PC-9 (cell line): ENCODE measurements at regions of chr22 and their contacts with region 1.

Region 1: DNA sequence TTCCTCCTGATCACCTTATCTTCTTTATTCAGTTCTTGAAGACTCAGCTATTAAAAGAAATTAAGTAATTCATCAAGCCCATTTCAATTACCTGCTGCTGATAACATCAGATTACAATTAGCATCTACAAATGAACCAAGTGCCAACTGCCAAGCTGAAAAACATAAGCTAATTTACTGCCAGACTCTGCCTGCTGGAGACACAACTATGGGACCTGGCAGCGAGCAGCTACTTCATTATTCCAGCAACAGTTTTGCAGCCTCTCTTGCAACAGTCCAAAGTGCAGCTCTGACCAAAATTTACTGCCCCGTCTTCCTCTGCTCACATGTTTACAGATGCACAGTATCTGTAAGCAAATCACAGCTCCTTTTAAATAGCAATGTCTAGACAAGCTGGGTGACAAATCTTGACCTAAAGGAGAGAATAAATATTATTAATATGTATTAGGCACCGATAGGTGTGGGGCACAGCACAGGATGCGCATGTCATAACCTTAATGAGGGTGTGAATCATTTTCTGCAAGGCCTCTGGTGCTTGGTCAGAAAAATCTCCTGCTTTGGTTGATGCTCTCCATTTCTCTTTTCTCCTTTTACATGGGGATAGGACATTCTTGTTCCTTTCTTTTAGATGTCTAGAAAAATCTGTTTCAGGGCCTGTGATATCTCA is 232.2 kb upstream of the PITPNB start:
- DNase-seq: no peak
- H3K4me3 ChIP-seq: no peak overlapping the region
- H3K27ac ChIP-seq: no peak overlapping the region
- H3K4me1 ChIP-seq: no peaks in the 10 kb centered on the region
- H3K27me3 ChIP-seq: no peaks in the 10 kb centered on the region
- CTCF ChIP-seq: no peak

Region 2: DNA sequence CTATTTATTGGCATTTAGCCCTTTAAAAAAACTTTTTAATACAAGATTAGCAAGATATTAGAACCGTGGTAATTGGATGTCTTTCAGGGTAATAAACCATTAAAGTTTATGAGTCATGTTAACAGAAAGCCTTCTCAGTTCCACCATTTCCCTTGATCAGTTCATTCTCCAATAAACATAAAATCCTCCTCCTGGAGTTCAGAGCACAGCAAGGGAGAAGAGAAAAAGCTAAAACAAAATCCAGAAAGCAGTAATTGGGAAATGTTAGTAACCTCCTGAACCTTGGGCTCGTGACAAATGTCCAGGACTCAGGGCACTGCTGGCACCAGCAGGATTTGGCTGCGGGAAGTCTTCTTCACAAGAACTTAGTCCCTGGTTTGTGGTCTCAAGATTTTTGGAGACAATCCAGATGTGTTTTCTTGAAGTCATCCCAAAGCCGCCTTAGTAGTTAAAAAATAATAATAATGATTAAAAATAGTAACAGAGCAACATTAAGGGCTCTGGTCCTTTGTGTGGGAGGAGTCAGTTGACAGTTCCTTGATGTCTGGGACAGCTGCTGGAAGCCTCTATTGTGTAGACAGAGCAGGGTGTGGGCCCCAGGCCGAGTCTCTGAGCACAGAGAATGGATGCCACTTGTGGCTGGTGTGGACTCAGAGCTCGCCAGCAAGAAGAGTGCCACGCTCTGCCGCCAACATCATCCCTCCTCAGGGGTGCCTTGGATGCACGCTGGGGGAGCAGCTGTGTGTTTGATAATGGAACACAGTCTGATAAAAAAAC is 188.8 kb before region 1 on chr22:
- CTCF ChIA-PET with region 1: no interaction called
- POLR2A ChIA-PET with region 1: no interaction called
- intact Hi-C with region 1: no loop called
- DNase-seq: no peak
- H3K4me3 ChIP-seq: no peak overlapping the region
- H3K27ac ChIP-seq: no peak overlapping the region
- H3K4me1 ChIP-seq: no peaks in the 10 kb centered on the region
- H3K27me3 ChIP-seq: no peaks in the 10 kb centered on the region
- CTCF ChIP-seq: no peak

Region 3: GRCh38 chr22:28002181-28002700 is 149.0 kb before region 1 on chr22:
- CTCF ChIA-PET with region 1: no interaction called
- POLR2A ChIA-PET with region 1: no interaction called
- intact Hi-C with region 1: no loop called
- DNase-seq: no peak
- H3K4me3 ChIP-seq: no peak overlapping the region
- H3K27ac ChIP-seq: no peak overlapping the region
- H3K4me1 ChIP-seq: peaks cover 10% of the 10 kb centered on the region
- H3K27me3 ChIP-seq: no peaks in the 10 kb centered on the region
- CTCF ChIP-seq: no peak

Region 4: GRCh38 chr22:28283068-28283654 is 131.9 kb after region 1 on chr22:
- CTCF ChIA-PET with region 1: no interaction called
- POLR2A ChIA-PET with region 1: interaction called, 10 read pairs
- intact Hi-C with region 1: no loop called
- DNase-seq: no peak
- H3K4me3 ChIP-seq: no peak overlapping the region
- H3K27ac ChIP-seq: no peak overlapping the region
- H3K4me1 ChIP-seq: no peaks in the 10 kb centered on the region
- H3K27me3 ChIP-seq: no peaks in the 10 kb centered on the region
- CTCF ChIP-seq: no peak

Region 5: DNA sequence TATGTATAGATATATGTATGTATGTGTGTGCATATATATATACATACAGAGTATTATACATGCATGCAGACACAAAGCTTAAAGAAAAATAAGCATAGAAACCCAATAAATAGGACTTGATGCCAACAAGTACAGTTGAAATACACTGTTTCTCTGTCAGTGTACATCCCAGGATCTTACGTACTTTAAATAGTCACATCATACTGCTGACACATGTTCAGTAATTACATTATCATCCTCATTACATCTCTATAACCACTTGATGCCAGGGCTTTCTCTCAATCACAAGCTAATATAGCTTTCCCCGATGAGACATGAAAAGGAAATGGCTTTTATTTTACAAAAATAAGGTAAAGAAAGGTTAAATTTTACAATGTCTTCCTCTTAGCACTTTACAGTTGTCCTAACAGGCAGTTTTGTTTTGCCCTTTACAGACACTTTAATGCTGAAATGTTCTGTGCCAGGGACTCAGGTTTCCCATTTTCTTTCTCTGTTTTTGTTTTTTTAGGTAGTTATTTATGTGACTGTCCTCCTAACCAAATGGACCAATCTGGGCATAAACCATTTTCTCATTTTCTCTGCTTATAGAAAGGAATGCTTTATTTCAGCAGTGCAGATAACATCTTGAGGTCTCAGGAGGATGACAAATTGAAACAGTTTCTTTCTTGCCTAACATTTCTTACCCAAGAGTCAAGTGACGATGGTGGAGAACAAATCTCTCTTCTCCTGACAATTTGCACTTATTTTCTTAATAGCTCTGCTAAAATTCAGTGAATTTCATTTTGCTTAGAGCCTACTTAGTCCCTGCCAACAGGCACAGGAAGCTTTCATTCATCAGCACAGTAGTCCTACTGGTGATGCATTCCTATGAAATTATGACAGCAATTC is 178.1 kb after region 1 on chr22:
- CTCF ChIA-PET with region 1: no interaction called
- POLR2A ChIA-PET with region 1: no interaction called
- intact Hi-C with region 1: no loop called
- DNase-seq: no peak
- H3K4me3 ChIP-seq: no peak overlapping the region
- H3K27ac ChIP-seq: no peak overlapping the region
- H3K4me1 ChIP-seq: no peaks in the 10 kb centered on the region
- H3K27me3 ChIP-seq: no peaks in the 10 kb centered on the region; the same call in 1 of the 2 replicates
- CTCF ChIP-seq: no peak

Region 6: DNA sequence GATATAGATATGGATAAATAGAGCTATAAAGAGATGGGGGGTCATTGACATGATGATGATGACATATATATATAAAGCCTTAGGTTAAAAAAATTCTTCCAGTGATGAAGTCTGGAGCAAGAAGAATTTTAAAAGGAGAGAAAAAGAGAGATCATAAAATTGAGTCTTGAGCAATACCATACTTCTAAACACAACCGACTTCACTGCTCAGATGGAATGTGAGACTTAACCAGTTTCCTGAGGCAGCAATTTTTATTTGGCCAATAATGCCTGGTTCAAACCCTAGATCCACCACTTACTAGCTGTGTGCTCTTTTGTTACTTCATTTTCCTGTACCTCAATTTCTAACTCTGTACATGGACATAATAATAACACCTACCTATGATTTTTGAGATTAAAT is 298.8 kb after region 1 on chr22:
- CTCF ChIA-PET with region 1: interaction called, 16 read pairs
- POLR2A ChIA-PET with region 1: no interaction called
- intact Hi-C with region 1: no loop called
- DNase-seq: no peak
- H3K4me3 ChIP-seq: no peak overlapping the region
- H3K27ac ChIP-seq: no peak overlapping the region
- H3K4me1 ChIP-seq: no peaks in the 10 kb centered on the region
- H3K27me3 ChIP-seq: no peaks in the 10 kb centered on the region
- CTCF ChIP-seq: no peak